ENCODE measurements at regions of chr5 and their contacts with region 1.

Region 1: DNA sequence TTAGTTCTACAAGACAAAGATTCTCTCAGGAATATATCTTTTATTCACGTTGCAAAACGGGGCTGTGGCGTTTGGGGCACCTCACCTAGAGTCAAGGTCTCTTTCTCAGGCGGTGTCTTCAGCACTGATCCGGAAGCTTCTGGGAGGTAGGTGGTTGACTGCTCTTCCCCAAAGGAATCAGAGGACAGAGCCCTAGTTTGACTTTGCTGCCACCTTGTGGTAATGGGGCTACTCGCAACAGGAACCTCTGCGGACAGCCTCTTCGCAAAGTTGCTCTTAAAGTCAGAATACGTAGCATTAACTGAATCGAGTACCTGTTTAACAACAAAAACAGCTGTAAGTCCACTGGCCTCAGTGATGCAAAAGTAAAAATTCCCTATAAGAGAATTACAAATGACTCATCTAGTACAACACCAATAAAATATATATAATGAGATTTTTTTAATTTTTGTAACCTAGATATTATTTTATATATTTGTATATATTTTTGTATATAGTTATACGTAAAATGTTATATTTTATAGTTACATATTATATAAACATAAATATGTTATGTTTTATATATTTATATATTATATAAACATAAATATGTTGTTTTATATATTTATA is 13.3 kb upstream of the GPX8 start:
- DNase-seq: peak; percentile 75 to 83
- H3K4me3 ChIP-seq: no peak overlapping the region
- H3K27ac ChIP-seq: no peak overlapping the region
- H3K4me1 ChIP-seq: peaks cover 0 to 6% (median 0%) of the 10 kb centered on the region in 4 donors
- H3K27me3 ChIP-seq: peaks cover 0 to 6% of the 10 kb centered on the region in 2 donors
- CTCF ChIP-seq: peak; percentile 88 to 89

Region 2: GRCh38 chr5:54905943-54906537 is 240.6 kb before region 1 on chr5:
- intact Hi-C with region 1: loop called (anchors 5 kb)
- DNase-seq: peak; percentile 74 to 79
- H3K4me3 ChIP-seq: no peak overlapping the region
- H3K27ac ChIP-seq: peak overlapping the region in 1 of 2 donors; percentile 0
- H3K4me1 ChIP-seq: peaks cover 0 to 25% (median under 1%) of the 10 kb centered on the region in 4 donors
- H3K27me3 ChIP-seq: no peaks in the 10 kb centered on the region
- CTCF ChIP-seq: peak; percentile 63 to 68

Region 3: GRCh38 chr5:55421074-55421529 is 274.5 kb after region 1 on chr5:
- intact Hi-C with region 1: no loop called
- DNase-seq: no peak
- H3K4me3 ChIP-seq: no peak overlapping the region
- H3K27ac ChIP-seq: peak overlapping the region in 1 of 2 donors; percentile 15
- H3K4me1 ChIP-seq: peaks cover 0 to 47% (median 15%) of the 10 kb centered on the region in 4 donors
- H3K27me3 ChIP-seq: no peaks in the 10 kb centered on the region
- CTCF ChIP-seq: no peak

Measured in tibial artery (tissue), 4 donors.